Caco-2 (cell line): ENCODE measurements at regions of chr5 and their contacts with region 1.

Region 1: GRCh38 chr5:77560677-77561263 is 68.7 kb upstream of the WDR41 start:
- DNase-seq: peak in 1 of 2 experiments; percentile 35
- H3K4me3 ChIP-seq: no peak overlapping the region
- H3K4me3 Mint-ChIP-seq: no peak overlapping the region
- H3K27ac Mint-ChIP-seq: no peak overlapping the region
- H3K4me1 ChIP-seq: 0 out of 2 replicates have a peak, but pooled peaks cover 4% of the 10 kb centered on the region
- H3K4me1 Mint-ChIP-seq: no peaks in the 10 kb centered on the region
- H3K27me3 ChIP-seq: no peaks in the 10 kb centered on the region; the same call in 1 of the 2 replicates
- H3K27me3 Mint-ChIP-seq: peaks cover 6% of the 10 kb centered on the region
- CTCF ChIP-seq: peak; percentile 56 to 73

Region 2: GRCh38 chr5:77630258-77631089 is 69.7 kb after region 1 on chr5:
- CTCF ChIA-PET with region 1: interaction called, 7 read pairs
- POLR2A ChIA-PET with region 1: no interaction called
- intact Hi-C with region 1: loop called (anchors 1 kb)
- DNase-seq: peak; percentile 82 to 83
- H3K4me3 ChIP-seq: peak overlapping the region; percentile 85
- H3K4me3 Mint-ChIP-seq: peak overlapping the region; percentile 78
- H3K27ac Mint-ChIP-seq: peak overlapping the region; percentile 64
- H3K4me1 ChIP-seq: 0 out of 2 replicates have a peak, but pooled peaks cover 4% of the 10 kb centered on the region
- H3K4me1 Mint-ChIP-seq: no peaks in the 10 kb centered on the region
- H3K27me3 ChIP-seq: no peaks in the 10 kb centered on the region
- H3K27me3 Mint-ChIP-seq: peaks cover 12% of the 10 kb centered on the region
- CTCF ChIP-seq: peak; percentile 10 to 19

Region 3: DNA sequence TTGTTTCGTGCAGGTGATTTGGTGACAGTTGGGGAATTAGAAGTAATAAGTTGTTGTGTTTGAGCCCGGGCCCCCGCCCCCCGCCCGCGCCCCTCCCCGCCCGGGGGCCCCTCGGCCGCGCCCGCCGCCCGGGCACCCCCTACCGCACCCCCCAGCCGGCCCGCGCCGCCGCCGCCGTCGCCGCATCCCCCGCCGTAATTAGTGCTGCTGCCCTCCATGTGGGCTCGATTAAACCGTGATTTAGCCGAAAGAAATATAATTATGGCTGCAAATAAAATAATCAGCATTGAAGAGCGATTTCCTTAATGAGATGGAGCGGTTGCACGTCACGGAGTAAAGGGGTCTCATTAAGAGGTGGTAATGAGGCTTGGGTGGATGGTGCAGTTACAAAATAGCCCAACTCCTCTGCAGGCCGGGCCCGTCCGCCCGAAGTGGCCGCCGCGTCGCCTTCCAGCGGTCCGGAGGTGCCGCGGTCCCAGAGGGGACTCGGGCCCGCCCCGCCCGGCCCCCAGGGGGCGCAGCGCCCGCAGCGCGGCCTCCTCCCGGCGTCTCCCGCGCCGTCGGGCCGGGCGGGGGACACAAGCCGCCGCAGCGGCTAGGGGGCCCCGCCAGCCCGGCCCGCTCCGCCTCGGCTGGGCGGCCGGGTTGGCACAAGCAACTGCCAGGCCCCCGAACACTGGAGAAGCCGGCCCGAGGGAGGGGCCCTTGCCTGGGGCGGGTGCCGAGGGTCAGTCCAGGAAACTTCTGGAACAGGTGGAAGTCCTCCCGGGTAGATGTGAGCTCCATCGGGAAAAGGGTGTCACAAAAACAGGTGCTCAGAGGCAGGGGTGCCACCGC is 84.6 kb after region 1 on chr5:
- CTCF ChIA-PET with region 1: no interaction called
- POLR2A ChIA-PET with region 1: no interaction called
- intact Hi-C with region 1: loop called (anchors 5 kb)
- DNase-seq: peak in 1 of 2 experiments; percentile 87
- H3K4me3 ChIP-seq: peak overlapping the region; percentile 43
- H3K4me3 Mint-ChIP-seq: peak overlapping the region; percentile 64
- H3K27ac Mint-ChIP-seq: no peak overlapping the region
- H3K4me1 ChIP-seq: peaks cover 10% of the 10 kb centered on the region; the same call in 1 of the 2 replicates
- H3K4me1 Mint-ChIP-seq: peaks cover 13% of the 10 kb centered on the region
- H3K27me3 ChIP-seq: no peaks in the 10 kb centered on the region; the same call in 1 of the 2 replicates
- H3K27me3 Mint-ChIP-seq: peaks cover 46% of the 10 kb centered on the region
- CTCF ChIP-seq: peak; percentile 34 to 53

Region 4: GRCh38 chr5:77981818-77982217 is 421.0 kb after region 1 on chr5:
- CTCF ChIA-PET with region 1: no interaction called
- POLR2A ChIA-PET with region 1: no interaction called
- intact Hi-C with region 1: loop called (anchors 5 kb)
- DNase-seq: no peak
- H3K4me3 ChIP-seq: no peak overlapping the region
- H3K4me3 Mint-ChIP-seq: no peak overlapping the region
- H3K27ac Mint-ChIP-seq: peak overlapping the region; percentile 21
- H3K4me1 ChIP-seq: peaks cover 10% of the 10 kb centered on the region; the same call in 1 of the 2 replicates
- H3K4me1 Mint-ChIP-seq: peaks cover 14% of the 10 kb centered on the region
- H3K27me3 ChIP-seq: no peaks in the 10 kb centered on the region
- H3K27me3 Mint-ChIP-seq: no peaks in the 10 kb centered on the region
- CTCF ChIP-seq: no peak